ENCODE measurements at regions of chr3 and their contacts with region 1.

Region 1: GRCh38 chr3:14508961-14509795 is 31.0 kb downstream of the GRIP2 start:
- DNase-seq: peak; percentile 95
- ATAC-seq: peak; percentile 86
- H3K4me3 Mint-ChIP-seq: peak overlapping the region; percentile 70
- H3K27ac Mint-ChIP-seq: no peak overlapping the region
- H3K4me1 Mint-ChIP-seq: peaks cover 9% of the 10 kb centered on the region; the same call in 1 of the 2 replicates
- H3K27me3 Mint-ChIP-seq: no peaks in the 10 kb centered on the region; the same call in 1 of the 2 replicates
- CTCF ChIP-seq: peak; percentile 99

Region 2: DNA sequence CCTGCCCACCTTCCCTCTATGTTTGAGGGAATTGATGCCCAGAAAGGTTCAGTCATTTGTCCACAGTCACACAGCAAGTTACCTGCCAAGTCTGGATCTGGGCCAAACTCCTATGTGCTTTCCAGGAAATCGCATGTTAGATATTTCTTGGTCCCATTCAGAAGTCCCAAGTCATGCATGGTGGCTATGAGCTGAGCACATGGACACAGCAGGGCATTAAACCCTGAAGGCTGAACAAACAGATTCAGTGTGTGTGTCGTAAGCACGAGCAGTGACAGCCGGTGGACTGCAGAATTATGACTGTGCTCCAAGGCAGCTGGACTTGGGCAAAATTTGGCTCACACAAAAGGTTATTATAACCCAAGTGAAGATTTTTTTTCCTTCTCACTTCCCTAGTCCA is 118.1 kb before region 1 on chr3:
- CTCF ChIA-PET with region 1: no interaction called
- POLR2A ChIA-PET with region 1: no interaction called
- DNase-seq: no peak
- ATAC-seq: no peak
- H3K4me3 Mint-ChIP-seq: no peak overlapping the region
- H3K27ac Mint-ChIP-seq: no peak overlapping the region
- H3K4me1 Mint-ChIP-seq: peaks cover 24% of the 10 kb centered on the region
- H3K27me3 Mint-ChIP-seq: peaks cover 3% of the 10 kb centered on the region; the same call in 1 of the 2 replicates
- CTCF ChIP-seq: no peak

Region 3: GRCh38 chr3:14497321-14497720 is 11.9 kb before region 1 on chr3:
- CTCF ChIA-PET with region 1: interaction called, 13 read pairs
- POLR2A ChIA-PET with region 1: no interaction called
- DNase-seq: peak; percentile 49
- ATAC-seq: peak; percentile 86
- H3K4me3 Mint-ChIP-seq: no peak overlapping the region
- H3K27ac Mint-ChIP-seq: no peak overlapping the region
- H3K4me1 Mint-ChIP-seq: peaks cover 3% of the 10 kb centered on the region
- H3K27me3 Mint-ChIP-seq: peaks cover 4% of the 10 kb centered on the region
- CTCF ChIP-seq: no peak

Region 4: DNA sequence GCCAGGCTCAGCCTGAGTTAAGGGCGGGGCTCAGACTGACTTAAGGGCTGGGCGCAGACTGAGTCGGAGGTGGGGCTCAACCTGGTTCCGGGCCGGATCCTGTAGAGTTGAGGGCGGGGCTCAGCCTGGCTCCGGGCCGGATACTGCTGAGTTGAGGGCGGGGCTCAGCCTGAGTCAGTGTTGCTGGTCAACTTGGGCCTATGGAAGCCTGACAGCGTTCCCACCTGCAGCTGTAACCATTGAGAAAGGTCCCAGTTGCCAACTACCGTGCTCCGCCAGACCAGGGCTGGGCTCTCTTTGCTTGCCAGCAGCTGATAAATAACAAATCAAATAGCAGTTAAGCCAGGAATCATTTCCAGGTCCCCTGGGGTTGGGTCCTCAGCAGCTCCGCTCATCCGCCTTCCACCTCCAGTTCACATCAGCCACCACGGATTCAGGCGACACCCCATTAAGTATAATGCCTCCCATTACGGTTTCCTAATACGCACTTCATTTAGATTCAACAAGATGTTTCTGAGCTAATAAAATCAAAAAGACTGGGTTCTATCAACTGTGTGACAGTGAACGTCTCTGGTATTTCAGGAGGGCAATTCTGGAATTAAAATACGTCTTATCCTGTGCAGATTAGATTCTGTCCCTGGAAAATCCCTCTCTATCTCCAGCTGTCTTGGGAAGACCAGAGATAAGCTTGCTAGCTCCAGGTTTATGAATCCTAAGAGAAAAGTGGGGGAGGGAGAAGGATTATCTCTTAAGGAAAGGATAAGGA is 23.7 kb after region 1 on chr3:
- CTCF ChIA-PET with region 1: interaction called, 16 read pairs
- POLR2A ChIA-PET with region 1: no interaction called
- DNase-seq: peak; percentile 91
- ATAC-seq: peak; percentile 94
- H3K4me3 Mint-ChIP-seq: peak overlapping the region; percentile 33; the same call in 1 of the 2 replicates
- H3K27ac Mint-ChIP-seq: peak overlapping the region; percentile 86
- H3K4me1 Mint-ChIP-seq: peaks cover 53% of the 10 kb centered on the region
- H3K27me3 Mint-ChIP-seq: no peaks in the 10 kb centered on the region; the same call in 1 of the 2 replicates
- CTCF ChIP-seq: no peak

Region 5: DNA sequence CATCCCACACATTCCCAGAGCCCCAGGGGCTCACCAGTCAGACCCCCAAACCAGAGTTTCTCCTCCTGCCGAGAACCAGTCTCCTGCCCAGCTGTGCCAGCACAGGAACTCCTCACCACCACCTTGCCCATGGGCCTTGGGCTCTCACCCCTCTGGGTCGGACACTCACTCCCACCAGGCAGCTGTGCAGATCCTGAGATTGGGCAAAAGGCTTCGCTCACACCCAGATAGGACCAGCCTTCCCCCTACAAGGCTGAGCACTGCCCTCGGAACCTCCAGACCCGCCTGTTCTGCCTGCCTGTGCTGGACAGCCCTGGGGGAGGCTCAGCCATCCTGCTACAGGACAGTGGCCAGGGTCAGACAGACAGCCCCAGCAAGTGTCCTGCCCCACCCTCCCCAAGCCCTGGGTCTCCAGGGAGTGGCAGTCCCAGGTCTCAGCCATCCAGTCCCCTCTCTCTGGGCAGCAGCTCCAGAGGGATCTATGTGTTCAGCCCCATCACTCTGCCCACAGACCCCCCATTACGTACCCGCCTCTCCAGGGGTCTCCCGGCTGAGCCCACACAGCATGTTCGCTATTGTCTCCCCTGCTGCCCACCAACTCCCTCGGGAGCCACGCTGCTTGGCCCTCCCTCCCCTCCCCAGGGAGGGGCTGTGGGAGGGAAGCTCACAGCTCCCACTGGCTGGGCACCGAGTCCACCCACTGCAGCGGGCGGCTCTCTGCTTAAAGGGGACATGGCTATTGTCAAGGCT is 30.7 kb after region 1 on chr3 and contains the start of gene GRIP2:
- CTCF ChIA-PET with region 1: interaction called, 18 read pairs
- POLR2A ChIA-PET with region 1: no interaction called
- DNase-seq: no peak
- ATAC-seq: no peak
- H3K4me3 Mint-ChIP-seq: no peak within 1 kb of the TSS
- H3K27ac Mint-ChIP-seq: no peak within 1 kb of the TSS
- H3K4me1 Mint-ChIP-seq: peaks cover 18% of the 10 kb centered on the region
- H3K27me3 Mint-ChIP-seq: no peaks in the 10 kb centered on the region; the same call in 1 of the 2 replicates
- CTCF ChIP-seq: no peak
- total RNA-seq, gene GRIP2: 11.4 to 12.0 TPM (median 11.7 TPM) in 3 replicates

Region 6: GRCh38 chr3:14602006-14602803 is 93.0 kb after region 1 on chr3:
- CTCF ChIA-PET with region 1: interaction called, 24 read pairs
- POLR2A ChIA-PET with region 1: no interaction called
- DNase-seq: peak; percentile 65
- ATAC-seq: peak; percentile 63
- H3K4me3 Mint-ChIP-seq: peak overlapping the region; percentile 71
- H3K27ac Mint-ChIP-seq: no peak overlapping the region
- H3K4me1 Mint-ChIP-seq: peaks cover 12% of the 10 kb centered on the region
- H3K27me3 Mint-ChIP-seq: peaks cover 32% of the 10 kb centered on the region
- CTCF ChIP-seq: no peak; the same call in 1 of the 2 replicates